Activated CD4-positive, alpha-beta memory T cell treated with anti-CD3 and anti-CD28 coated beads, Interleukin-2, amount 10 ng/mL, durations not matched to agents 7 days and 5 days (primary cell): ENCODE measurements at regions of chr20 and their contacts with region 1.

Region 1: DNA sequence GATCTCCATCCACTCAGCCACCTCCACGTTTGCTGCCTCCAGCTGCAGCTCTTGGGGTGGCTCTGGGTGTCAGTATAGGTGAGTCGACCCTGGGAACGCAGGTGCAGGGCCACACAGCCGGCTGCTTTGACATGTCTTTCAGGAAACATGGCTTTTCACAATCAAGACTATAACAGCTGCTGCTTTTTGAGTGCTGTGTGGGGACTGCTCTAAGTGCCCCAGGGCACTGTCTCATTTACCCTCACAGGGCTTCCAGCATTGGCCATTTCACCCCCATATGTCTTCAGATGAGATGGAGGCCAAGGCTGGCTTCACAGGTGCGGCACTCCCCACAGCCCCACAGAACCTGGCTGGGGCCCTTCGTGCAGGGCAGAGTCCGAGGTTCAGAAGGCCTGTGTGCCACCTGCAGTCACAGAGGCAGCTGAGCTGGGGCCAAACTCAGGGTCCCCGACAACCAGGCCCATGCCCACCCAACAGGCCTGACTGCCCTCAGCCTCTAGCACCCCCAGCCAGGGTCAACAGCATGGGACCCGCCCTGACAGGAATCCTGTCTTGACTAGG is 14.9 kb upstream of the CST7 start:
- DNase-seq: peak; percentile 14
- H3K4me3 Mint-ChIP-seq: no peak overlapping the region
- H3K27ac Mint-ChIP-seq: no peak overlapping the region
- H3K4me1 Mint-ChIP-seq: peaks cover 29% of the 10 kb centered on the region
- H3K27me3 Mint-ChIP-seq: no peaks in the 10 kb centered on the region

Region 2: DNA sequence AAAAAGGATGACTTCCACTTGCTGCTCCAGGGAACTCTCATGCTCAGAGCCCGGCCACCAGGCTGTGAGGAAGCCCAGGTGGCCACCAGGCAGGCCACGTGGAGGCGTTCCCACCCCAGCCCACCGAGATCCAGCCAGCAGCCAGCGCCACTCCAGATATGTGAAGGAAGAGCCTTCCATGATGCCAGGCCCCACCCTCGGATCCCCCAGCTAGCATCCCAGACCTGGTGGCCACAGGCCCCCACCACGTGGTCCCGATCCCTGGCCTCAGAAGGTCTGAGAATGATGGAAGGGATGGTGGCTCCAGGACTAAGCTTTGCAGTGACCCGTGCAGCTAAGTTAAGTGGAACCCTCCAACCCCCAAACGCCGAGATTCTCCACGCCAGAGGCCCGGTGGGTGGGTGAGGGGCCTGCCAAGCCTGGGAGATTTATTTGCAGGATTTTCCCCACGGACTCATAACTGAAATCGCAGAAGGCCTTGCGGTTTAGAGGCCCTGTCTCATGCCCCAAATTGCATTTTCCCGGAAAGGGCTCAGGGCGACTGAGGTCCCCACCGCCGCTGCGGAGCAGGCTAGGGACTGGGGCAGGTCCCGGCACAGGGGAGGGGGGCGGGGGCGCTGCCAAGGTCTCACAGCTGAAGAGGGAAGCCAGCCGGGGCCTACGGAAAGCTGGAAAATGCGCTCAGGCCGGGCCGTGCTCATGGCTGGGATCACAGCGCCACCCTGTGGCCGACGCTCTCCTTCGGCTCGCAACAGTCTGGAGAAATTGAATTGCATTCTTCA is 16.2 kb before region 1 on chr20:
- CTCF ChIA-PET with region 1: interaction called, 23 read pairs
- POLR2A ChIA-PET with region 1: no interaction called
- DNase-seq: peak; percentile 57
- H3K4me3 Mint-ChIP-seq: no peak overlapping the region
- H3K27ac Mint-ChIP-seq: no peak overlapping the region
- H3K4me1 Mint-ChIP-seq: peaks cover 12% of the 10 kb centered on the region
- H3K27me3 Mint-ChIP-seq: peaks cover 7% of the 10 kb centered on the region

Region 3: GRCh38 chr20:24955045-24955444 is 20.9 kb after region 1 on chr20:
- CTCF ChIA-PET with region 1: interaction called, 21 read pairs
- POLR2A ChIA-PET with region 1: interaction called, 39 read pairs
- DNase-seq: peak; percentile 44
- H3K4me3 Mint-ChIP-seq: no peak overlapping the region
- H3K27ac Mint-ChIP-seq: peak overlapping the region; percentile 79
- H3K4me1 Mint-ChIP-seq: peaks cover 56% of the 10 kb centered on the region
- H3K27me3 Mint-ChIP-seq: no peaks in the 10 kb centered on the region

Region 4: DNA sequence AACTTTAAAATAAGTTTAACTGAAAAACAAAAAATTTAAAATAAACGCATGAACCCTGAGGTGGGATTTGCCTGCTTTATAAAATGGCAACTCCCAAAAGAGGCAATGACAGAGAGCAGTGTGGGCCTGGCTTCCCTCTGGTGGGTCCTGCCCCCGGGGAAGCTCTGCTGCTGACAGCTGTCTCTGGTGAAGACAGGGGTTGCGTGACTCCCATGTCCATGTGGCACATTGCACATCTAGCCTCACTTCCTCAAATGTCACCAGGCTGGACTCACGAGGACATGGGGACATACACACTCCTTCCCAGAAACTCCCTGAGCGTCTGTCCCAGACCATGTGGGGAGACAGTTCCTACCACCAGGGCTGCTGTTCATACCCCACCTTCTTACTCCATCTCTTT is 390.2 kb after region 1 on chr20:
- CTCF ChIA-PET with region 1: no interaction called
- POLR2A ChIA-PET with region 1: no interaction called
- DNase-seq: no peak
- H3K4me3 Mint-ChIP-seq: no peak overlapping the region
- H3K27ac Mint-ChIP-seq: no peak overlapping the region
- H3K4me1 Mint-ChIP-seq: peaks cover 12% of the 10 kb centered on the region
- H3K27me3 Mint-ChIP-seq: no peaks in the 10 kb centered on the region